Pancreas (tissue), 10 donors: ENCODE measurements at regions of chr19 and their contacts with region 1.

Region 1: GRCh38 chr19:940591-941291 is 14.9 kb downstream of the ARID3A start:
- DNase-seq: peak; percentile 85 to 95 (median 92)
- ATAC-seq: peak; percentile 87 to 90 (median 88)
- H3K4me3 ChIP-seq: peak overlapping the region; percentile 2 to 36 (median 20)
- H3K27ac ChIP-seq: peak overlapping the region; percentile 83 to 94 (median 86)
- H3K4me1 ChIP-seq: peaks cover 15 to 32% (median 17%) of the 10 kb centered on the region in 3 donors
- H3K27me3 ChIP-seq: no peaks in the 10 kb centered on the region
- CTCF ChIP-seq: no peak

Region 2: GRCh38 chr19:883661-884211 is 57.0 kb before region 1 on chr19:
- intact Hi-C with region 1: no loop called
- DNase-seq: peak in 2 of 6 donors; percentile 59 to 63
- ATAC-seq: peak; percentile 17 to 38 (median 27)
- H3K4me3 ChIP-seq: no peak overlapping the region
- H3K27ac ChIP-seq: no peak overlapping the region
- H3K4me1 ChIP-seq: no peaks in the 10 kb centered on the region
- H3K27me3 ChIP-seq: no peaks in the 10 kb centered on the region
- CTCF ChIP-seq: no peak

Region 3: DNA sequence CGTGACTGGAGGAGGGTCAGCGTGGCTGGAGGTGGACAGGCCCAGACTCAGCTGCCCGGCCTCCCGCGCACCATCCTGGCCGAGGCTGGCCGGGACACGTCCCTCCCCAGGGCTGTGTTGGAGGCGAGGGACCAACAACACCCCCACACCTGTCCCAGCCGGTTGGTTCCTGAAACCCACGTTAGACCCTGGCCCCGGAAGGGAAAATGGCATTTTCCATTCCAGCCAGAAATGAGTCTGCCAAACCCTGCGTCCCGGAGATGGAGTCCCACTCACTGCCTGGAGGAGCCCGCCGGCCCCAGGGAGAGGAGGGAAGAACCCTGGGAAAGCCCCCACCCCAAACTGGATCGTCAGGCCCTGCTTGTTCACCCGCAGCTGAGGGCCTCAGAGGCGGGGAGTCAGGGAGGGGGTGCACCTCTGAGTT is 38.6 kb after region 1 on chr19:
- intact Hi-C with region 1: loop called in 1 of 3 experiments (anchors 5 kb)
- DNase-seq: no peak
- ATAC-seq: no peak
- H3K4me3 ChIP-seq: no peak overlapping the region
- H3K27ac ChIP-seq: no peak overlapping the region
- H3K4me1 ChIP-seq: peaks cover 0 to 8% (median 0%) of the 10 kb centered on the region in 3 donors
- H3K27me3 ChIP-seq: no peaks in the 10 kb centered on the region
- CTCF ChIP-seq: no peak